CD4-positive, alpha-beta T cell (primary cell): ENCODE measurements at regions of chr6 and their contacts with region 1.

Region 1: DNA sequence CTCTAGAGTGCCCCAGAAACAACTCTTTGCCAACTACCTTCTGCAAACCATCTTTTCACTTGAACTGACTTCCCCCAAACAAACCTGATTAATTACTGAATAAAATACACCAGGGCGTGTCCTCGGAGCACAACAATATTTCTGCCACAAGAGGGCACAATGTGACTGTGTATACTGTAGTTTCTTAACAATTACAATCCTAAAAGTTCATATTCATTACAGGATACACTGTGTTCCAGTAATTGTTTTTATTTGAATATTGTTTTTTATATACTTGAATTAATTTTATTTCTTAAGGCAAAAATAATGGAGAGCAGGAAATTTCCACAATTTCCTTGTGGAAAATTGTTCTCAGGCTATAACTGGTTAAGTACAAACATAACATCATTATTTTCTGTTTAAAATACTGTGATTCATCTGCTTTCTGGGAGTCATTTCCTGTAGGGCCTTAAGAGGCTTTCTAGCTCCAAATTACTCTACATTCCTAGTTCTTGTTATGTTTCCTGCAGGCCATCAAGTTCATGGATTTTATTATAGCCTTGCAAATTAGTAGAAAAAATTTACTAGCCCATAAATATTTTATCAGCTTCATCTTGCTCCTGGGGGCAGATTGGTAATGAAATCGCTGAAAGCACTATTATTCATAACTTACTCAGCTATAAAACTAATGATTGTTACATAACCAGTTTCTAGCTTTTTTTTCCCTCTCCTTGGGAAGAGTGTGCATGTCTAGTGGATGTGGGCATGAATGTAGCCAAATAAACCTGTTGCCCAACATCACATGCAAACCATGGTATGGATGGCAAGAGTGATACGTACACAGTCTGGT is 51.9 kb upstream of the SLC22A16 start:
- DNase-seq: peak in 13 of 14 experiments; percentile 8 to 78 (median 25)
- ATAC-seq: peak; percentile 70
- H3K4me3 ChIP-seq: no peak overlapping the region
- H3K4me3 Mint-ChIP-seq: no peak overlapping the region
- H3K27ac ChIP-seq: no peak overlapping the region
- H3K27ac Mint-ChIP-seq: no peak overlapping the region
- H3K4me1 ChIP-seq: no peaks in the 10 kb centered on the region
- H3K4me1 Mint-ChIP-seq: no peaks in the 10 kb centered on the region
- H3K27me3 ChIP-seq: no peaks in the 10 kb centered on the region
- H3K27me3 Mint-ChIP-seq: no peaks in the 10 kb centered on the region
- CTCF ChIP-seq: peak; percentile 84

Region 2: DNA sequence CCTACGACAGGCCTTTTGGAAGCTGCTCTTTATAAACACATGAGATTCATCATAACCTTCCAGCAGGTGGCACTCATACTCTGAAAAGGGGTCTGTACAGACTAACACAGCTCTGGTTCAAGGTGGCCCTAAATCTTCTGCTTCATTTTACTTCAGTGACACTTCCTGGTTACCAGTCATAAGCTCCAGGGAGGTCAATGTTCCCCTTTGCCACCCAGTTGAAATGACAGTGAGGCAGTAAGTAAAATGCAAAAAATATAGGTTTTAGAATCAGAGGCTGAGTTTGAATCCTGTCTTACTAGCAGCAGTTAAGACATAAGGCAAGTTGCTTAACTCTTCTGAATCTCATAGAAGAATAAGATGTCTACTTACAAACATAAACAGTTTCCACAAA is 154.1 kb after region 1 on chr6:
- CTCF ChIA-PET with region 1: no interaction called
- POLR2A ChIA-PET with region 1: no interaction called
- intact Hi-C with region 1: loop called (anchors 1 to 2 kb)
- DNase-seq: peak in 12 of 14 experiments; percentile 21 to 88 (median 60)
- ATAC-seq: peak; percentile 99
- H3K4me3 ChIP-seq: no peak overlapping the region
- H3K4me3 Mint-ChIP-seq: no peak overlapping the region
- H3K27ac ChIP-seq: no peak overlapping the region
- H3K27ac Mint-ChIP-seq: no peak overlapping the region
- H3K4me1 ChIP-seq: peaks cover 10% of the 10 kb centered on the region
- H3K4me1 Mint-ChIP-seq: peaks cover 19% of the 10 kb centered on the region
- H3K27me3 ChIP-seq: no peaks in the 10 kb centered on the region
- H3K27me3 Mint-ChIP-seq: no peaks in the 10 kb centered on the region
- CTCF ChIP-seq: peak; percentile 86

Region 3: GRCh38 chr6:110949679-110950285 is 421.5 kb after region 1 on chr6:
- CTCF ChIA-PET with region 1: interaction called, 3 read pairs
- POLR2A ChIA-PET with region 1: no interaction called
- intact Hi-C with region 1: loop called (anchors 1 kb)
- DNase-seq: peak in 3 of 14 experiments; percentile 60
- ATAC-seq: peak; percentile 41
- H3K4me3 ChIP-seq: no peak overlapping the region
- H3K4me3 Mint-ChIP-seq: no peak overlapping the region
- H3K27ac ChIP-seq: no peak overlapping the region
- H3K27ac Mint-ChIP-seq: no peak overlapping the region
- H3K4me1 ChIP-seq: no peaks in the 10 kb centered on the region
- H3K4me1 Mint-ChIP-seq: peaks cover 12% of the 10 kb centered on the region
- H3K27me3 ChIP-seq: no peaks in the 10 kb centered on the region
- H3K27me3 Mint-ChIP-seq: peaks cover 4% of the 10 kb centered on the region
- CTCF ChIP-seq: peak; percentile 66

Region 4: GRCh38 chr6:110999634-111000270 is 471.4 kb after region 1 on chr6:
- CTCF ChIA-PET with region 1: interaction called, 4 read pairs
- POLR2A ChIA-PET with region 1: no interaction called
- intact Hi-C with region 1: loop called (anchors 1 kb)
- DNase-seq: peak in 3 of 14 experiments; percentile 47 to 56 (median 54)
- ATAC-seq: no peak
- H3K4me3 ChIP-seq: no peak overlapping the region
- H3K4me3 Mint-ChIP-seq: no peak overlapping the region
- H3K27ac ChIP-seq: no peak overlapping the region
- H3K27ac Mint-ChIP-seq: no peak overlapping the region
- H3K4me1 ChIP-seq: no peaks in the 10 kb centered on the region
- H3K4me1 Mint-ChIP-seq: no peaks in the 10 kb centered on the region
- H3K27me3 ChIP-seq: no peaks in the 10 kb centered on the region
- H3K27me3 Mint-ChIP-seq: no peaks in the 10 kb centered on the region
- CTCF ChIP-seq: peak; percentile 50

Region 5: GRCh38 chr6:111210194-111210728 is 681.9 kb after region 1 on chr6:
- CTCF ChIA-PET with region 1: no interaction called
- POLR2A ChIA-PET with region 1: no interaction called
- intact Hi-C with region 1: loop called (anchors 2 to 10 kb)
- DNase-seq: peak in 5 of 14 experiments; percentile 9 to 76 (median 68)
- ATAC-seq: peak; percentile 83
- H3K4me3 ChIP-seq: no peak overlapping the region
- H3K4me3 Mint-ChIP-seq: no peak overlapping the region
- H3K27ac ChIP-seq: no peak overlapping the region
- H3K27ac Mint-ChIP-seq: no peak overlapping the region
- H3K4me1 ChIP-seq: no peaks in the 10 kb centered on the region
- H3K4me1 Mint-ChIP-seq: peaks cover 6% of the 10 kb centered on the region
- H3K27me3 ChIP-seq: no peaks in the 10 kb centered on the region
- H3K27me3 Mint-ChIP-seq: no peaks in the 10 kb centered on the region
- CTCF ChIP-seq: peak; percentile 82

Region 6: GRCh38 chr6:112163295-112164257 is 1635.3 kb after region 1 on chr6:
- CTCF ChIA-PET with region 1: no interaction called
- POLR2A ChIA-PET with region 1: no interaction called
- intact Hi-C with region 1: loop called in 1 of 2 experiments (anchors 5 kb)
- DNase-seq: peak; percentile 56 to 83 (median 68)
- ATAC-seq: peak; percentile 97
- H3K4me3 ChIP-seq: no peak overlapping the region
- H3K4me3 Mint-ChIP-seq: peak overlapping the region; percentile 35
- H3K27ac ChIP-seq: no peak overlapping the region
- H3K27ac Mint-ChIP-seq: no peak overlapping the region
- H3K4me1 ChIP-seq: peaks cover 10% of the 10 kb centered on the region
- H3K4me1 Mint-ChIP-seq: peaks cover 12% of the 10 kb centered on the region
- H3K27me3 ChIP-seq: peaks cover 0 to 11% of the 10 kb centered on the region in 2 experiments
- H3K27me3 Mint-ChIP-seq: peaks cover 32% of the 10 kb centered on the region
- CTCF ChIP-seq: peak; percentile 87